ENCODE measurements at regions of chr9 and their contacts with region 1.

Region 1: DNA sequence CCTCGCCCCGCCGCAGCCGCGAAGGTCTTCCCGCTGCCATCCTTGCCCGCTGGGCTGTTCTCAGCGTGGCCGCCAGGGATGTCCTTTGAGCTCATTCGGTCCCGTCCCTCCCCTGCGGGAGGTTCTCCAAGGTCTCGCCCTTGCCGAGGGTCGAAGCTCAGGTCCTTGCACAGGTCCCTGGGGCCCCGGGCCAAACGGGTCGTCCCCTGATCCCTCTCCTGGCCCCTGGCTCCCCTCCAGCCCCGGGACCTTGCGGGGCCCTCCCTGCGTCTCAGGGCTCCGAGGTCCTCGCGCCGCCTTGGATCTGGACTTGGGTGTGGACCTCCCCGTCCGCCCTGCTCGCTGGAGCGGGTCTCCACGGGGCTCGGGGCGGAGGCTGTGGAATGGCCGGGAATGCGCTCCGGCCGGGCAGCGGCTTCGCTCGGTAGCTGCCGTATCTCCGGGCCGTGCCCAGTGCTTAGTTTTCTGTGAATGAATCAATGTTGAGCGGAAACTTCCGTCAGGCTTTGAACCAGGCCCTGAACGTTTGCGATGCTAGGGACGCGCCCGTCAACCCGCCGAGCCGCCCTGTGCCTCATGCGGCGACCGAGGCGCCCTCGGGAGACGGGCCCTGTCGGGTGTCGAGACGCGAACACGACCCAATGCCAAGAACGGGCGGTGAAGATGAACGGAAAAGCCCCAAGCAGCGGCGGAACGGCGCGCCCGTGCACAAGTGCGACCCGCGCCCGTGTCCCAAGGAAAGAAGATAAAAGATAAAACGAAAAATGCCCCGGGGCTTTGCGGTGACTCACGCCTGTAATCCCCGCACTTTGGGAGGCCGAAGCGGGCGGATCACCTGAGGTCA is 789 bp downstream of the RNU6ATAC start:
- DNase-seq: no peak
- ATAC-seq: no peak
- H3K4me3 ChIP-seq: no peak overlapping the region
- H3K27ac ChIP-seq: no peak overlapping the region
- H3K4me1 ChIP-seq: peaks cover 3 to 24% of the 10 kb centered on the region in 2 experiments; a peak in 2 of 5 replicates
- H3K27me3 ChIP-seq: no peaks in the 10 kb centered on the region
- CTCF ChIP-seq: no peak
- EP300 ChIP-seq: no peak
- POLR2A ChIP-seq: no peak
- RAD21 ChIP-seq: no peak

Region 2: DNA sequence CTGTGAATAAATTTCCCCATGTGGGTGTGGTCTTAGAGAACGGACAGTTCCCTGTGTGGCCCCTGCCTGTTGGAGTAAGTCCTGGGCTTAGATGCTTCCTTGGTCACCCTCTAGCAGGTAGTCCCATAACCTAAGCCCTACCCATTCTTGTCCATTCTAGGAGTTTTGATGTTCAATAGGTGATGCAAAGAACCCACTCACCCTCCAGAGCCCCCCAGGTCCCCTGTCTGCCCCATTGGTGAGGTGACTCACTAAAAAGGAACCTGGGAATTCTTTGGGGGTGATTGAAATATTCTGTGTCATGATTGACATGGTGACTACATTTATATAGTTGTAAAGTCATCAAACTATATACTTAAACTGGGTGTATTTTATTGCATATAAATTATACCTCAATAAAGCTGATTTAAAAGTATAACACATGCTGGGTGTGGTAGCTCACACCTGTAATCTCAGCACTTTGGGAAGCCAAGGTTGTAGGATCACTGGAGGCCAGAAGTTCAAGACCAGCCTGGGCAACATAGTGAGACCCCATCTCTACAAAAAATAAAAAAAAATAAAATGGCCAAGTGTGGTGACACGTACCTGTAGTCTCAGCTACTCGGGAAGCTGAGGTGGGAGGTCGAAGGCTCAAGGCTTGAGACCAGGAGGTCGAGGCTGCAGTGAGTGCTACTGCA is 1153.5 kb before region 1 on chr9:
- CTCF ChIA-PET with region 1: no interaction called
- POLR2A ChIA-PET with region 1: no interaction called
- in situ Hi-C with region 1: no loop called
- intact Hi-C with region 1: loop called (anchors 10 kb)
- DNase-seq: no peak
- ATAC-seq: no peak
- H3K4me3 ChIP-seq: no peak overlapping the region
- H3K27ac ChIP-seq: no peak overlapping the region
- H3K4me1 ChIP-seq: peaks cover 17 to 21% of the 10 kb centered on the region in 2 experiments
- H3K27me3 ChIP-seq: no peaks in the 10 kb centered on the region
- CTCF ChIP-seq: no peak
- EP300 ChIP-seq: no peak
- POLR2A ChIP-seq: no peak
- RAD21 ChIP-seq: no peak

Region 3: GRCh38 chr9:134076644-134077043 is 86.9 kb before region 1 on chr9:
- CTCF ChIA-PET with region 1: no interaction called
- POLR2A ChIA-PET with region 1: no interaction called
- in situ Hi-C with region 1: no loop called
- intact Hi-C with region 1: no loop called
- DNase-seq: no peak
- ATAC-seq: no peak
- H3K4me3 ChIP-seq: no peak overlapping the region
- H3K27ac ChIP-seq: no peak overlapping the region
- H3K4me1 ChIP-seq: no peaks in the 10 kb centered on the region
- H3K27me3 ChIP-seq: peaks cover 14 to 33% of the 10 kb centered on the region in 2 experiments
- CTCF ChIP-seq: no peak
- EP300 ChIP-seq: no peak
- POLR2A ChIP-seq: no peak
- RAD21 ChIP-seq: no peak

Region 4: DNA sequence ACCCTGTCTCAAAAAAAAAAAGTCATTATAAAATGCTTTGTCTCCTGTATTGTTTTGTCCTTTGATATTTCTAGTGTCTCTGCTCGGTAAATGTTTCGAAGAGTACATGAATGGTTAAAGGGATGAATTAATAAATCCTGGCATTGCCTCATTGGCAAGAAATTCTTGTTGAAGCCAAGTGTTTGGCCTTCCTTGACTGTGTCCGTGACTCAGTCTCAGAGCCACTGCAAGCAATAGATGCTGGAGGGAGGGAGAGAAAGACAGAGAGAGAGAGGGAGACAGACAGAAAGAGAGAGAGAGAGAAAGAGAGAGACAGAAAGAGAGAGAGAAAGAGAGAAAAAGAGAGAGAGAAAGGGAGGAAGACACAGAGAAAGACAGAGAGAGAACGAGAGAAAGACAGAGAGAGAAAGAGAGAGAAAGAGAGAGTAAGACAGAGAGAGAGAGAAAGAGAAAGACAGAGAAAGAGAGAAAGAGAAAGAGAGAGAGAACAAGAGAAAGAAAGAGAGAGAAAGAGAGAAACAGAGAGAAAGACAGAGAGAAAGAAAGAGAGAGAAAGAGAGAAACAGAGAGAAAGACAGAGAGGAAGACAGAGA is 90.1 kb after region 1 on chr9:
- CTCF ChIA-PET with region 1: no interaction called
- POLR2A ChIA-PET with region 1: no interaction called
- in situ Hi-C with region 1: no loop called
- intact Hi-C with region 1: no loop called
- DNase-seq: no peak
- ATAC-seq: no peak
- H3K4me3 ChIP-seq: no peak overlapping the region
- H3K27ac ChIP-seq: no peak overlapping the region
- H3K4me1 ChIP-seq: no peaks in the 10 kb centered on the region
- H3K27me3 ChIP-seq: peaks cover 27 to 75% of the 10 kb centered on the region in 2 experiments
- CTCF ChIP-seq: no peak
- EP300 ChIP-seq: no peak
- POLR2A ChIP-seq: no peak
- RAD21 ChIP-seq: no peak